ENCODE measurements at regions of chr1 and their contacts with region 1.

Region 1: DNA sequence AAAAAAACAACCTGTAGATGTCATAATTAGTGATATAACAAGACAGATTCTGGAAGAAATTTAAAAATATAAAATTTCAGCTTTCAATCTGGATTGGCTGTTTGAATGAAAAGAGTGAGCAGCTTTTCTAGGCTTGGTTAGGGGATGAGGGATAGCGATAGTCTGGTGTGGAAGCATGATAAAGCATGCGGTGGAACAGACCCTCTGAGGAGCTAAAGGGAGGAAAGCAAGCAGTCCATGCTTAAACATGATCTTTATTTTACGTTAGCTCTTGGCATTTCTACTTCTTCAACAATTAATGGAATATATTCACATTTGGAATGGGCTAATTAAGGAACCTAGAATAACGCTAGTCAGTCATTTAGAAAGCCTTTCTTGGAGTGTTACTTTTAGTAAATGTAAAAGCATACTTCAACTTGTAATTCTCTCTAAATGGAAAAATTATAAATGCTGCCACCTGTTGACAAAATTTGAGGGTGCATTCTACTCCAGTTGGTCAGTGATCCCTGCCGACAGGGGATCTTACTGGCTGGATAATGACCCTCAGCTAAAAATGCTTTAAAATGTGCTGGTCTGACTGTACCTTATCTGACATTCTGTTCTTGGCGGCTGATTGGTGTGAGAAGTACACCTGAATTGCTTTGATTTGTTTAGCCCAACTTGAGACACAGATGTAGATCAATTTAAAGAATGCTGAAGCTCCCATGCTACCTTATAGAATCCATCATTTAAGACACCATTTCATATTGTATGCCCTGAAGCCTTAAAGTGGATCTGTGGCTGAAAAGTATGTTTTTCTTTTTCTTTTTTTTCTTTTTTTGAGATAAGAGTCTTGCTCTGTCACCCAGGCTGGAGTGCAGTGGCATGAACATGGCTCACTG is 61.2 kb downstream of the AK4 start:
- DNase-seq: no peak
- ATAC-seq: peak; percentile 40
- H3K4me3 Mint-ChIP-seq: no peak overlapping the region
- H3K27ac Mint-ChIP-seq: no peak overlapping the region
- H3K4me1 Mint-ChIP-seq: peaks cover 77% of the 10 kb centered on the region
- H3K27me3 Mint-ChIP-seq: no peaks in the 10 kb centered on the region
- CTCF ChIP-seq: peak; percentile 42; the same call in 1 of the 2 replicates

Region 2: DNA sequence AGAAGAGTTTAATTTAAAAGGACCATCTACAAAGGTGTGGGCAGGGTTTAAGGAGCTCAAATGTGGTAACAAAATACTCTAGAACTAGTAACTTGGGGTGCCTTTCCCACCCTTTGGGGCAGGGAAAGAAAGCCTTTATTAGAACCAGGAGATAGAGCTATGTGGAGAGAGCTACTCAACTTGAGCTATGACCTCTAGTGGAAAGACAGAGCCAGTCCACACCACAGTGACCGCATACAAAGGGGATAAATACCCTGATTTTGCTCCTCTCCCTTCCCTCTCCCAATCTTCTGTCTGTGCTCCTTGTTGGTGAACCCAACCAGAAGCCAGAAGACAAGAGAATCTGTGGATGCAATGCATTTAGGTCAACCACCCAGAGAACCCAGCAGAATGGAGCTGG is 188.5 kb before region 1 on chr1:
- CTCF ChIA-PET with region 1: interaction called, 11 read pairs
- POLR2A ChIA-PET with region 1: no interaction called
- DNase-seq: no peak
- ATAC-seq: peak; percentile 98
- H3K4me3 Mint-ChIP-seq: no peak overlapping the region
- H3K27ac Mint-ChIP-seq: no peak overlapping the region
- H3K4me1 Mint-ChIP-seq: peaks cover 29% of the 10 kb centered on the region
- H3K27me3 Mint-ChIP-seq: no peaks in the 10 kb centered on the region
- CTCF ChIP-seq: no peak

Region 3: GRCh38 chr1:65075123-65075976 is 133.9 kb before region 1 on chr1:
- CTCF ChIA-PET with region 1: interaction called, 14 read pairs
- POLR2A ChIA-PET with region 1: no interaction called
- DNase-seq: peak; percentile 45
- ATAC-seq: peak; percentile 96
- H3K4me3 Mint-ChIP-seq: no peak overlapping the region
- H3K27ac Mint-ChIP-seq: no peak overlapping the region
- H3K4me1 Mint-ChIP-seq: peaks cover 4% of the 10 kb centered on the region; the same call in 1 of the 2 replicates
- H3K27me3 Mint-ChIP-seq: no peaks in the 10 kb centered on the region
- CTCF ChIP-seq: peak; percentile 44; the same call in 1 of the 2 replicates

Region 4: GRCh38 chr1:65174585-65174984 is 34.7 kb before region 1 on chr1:
- CTCF ChIA-PET with region 1: interaction called, 10 read pairs
- POLR2A ChIA-PET with region 1: no interaction called
- DNase-seq: no peak
- ATAC-seq: no peak
- H3K4me3 Mint-ChIP-seq: no peak overlapping the region
- H3K27ac Mint-ChIP-seq: peak overlapping the region; percentile 46
- H3K4me1 Mint-ChIP-seq: peaks cover 88% of the 10 kb centered on the region
- H3K27me3 Mint-ChIP-seq: no peaks in the 10 kb centered on the region
- CTCF ChIP-seq: no peak